ENCODE measurements at regions of chr6 and their contacts with region 1.

Region 1: DNA sequence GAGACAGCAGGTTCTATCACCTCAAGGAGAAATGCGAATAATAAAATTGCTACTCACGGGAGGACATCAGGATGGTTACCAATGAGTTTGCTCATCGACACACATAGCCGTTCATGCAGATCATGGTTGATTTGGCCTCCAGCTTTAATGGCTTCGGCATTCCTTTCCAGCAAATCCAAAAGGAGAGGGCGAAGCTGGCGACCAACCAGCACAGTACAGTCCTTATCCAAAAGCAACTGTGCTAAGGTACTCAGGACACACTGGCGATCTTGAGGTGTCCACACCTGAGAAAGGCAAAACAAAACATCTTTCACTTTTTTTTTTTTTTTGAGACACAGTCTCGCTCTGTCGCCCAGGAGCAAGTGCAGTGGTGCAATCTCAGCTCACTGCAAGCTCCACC is 16.3 kb downstream of the MDN1 start:
- DNase-seq: no peak
- ATAC-seq: no peak
- H3K4me3 Mint-ChIP-seq: no peak overlapping the region
- H3K27ac Mint-ChIP-seq: no peak overlapping the region
- H3K4me1 Mint-ChIP-seq: peaks cover 9% of the 10 kb centered on the region
- H3K27me3 Mint-ChIP-seq: no peaks in the 10 kb centered on the region

Region 2: GRCh38 chr6:89792873-89793272 is 10.4 kb before region 1 on chr6:
- CTCF ChIA-PET with region 1: interaction called, 10 read pairs
- POLR2A ChIA-PET with region 1: no interaction called
- intact Hi-C with region 1: no loop called
- DNase-seq: peak; percentile 35
- ATAC-seq: peak; percentile 72
- H3K4me3 Mint-ChIP-seq: no peak overlapping the region
- H3K27ac Mint-ChIP-seq: no peak overlapping the region
- H3K4me1 Mint-ChIP-seq: peaks cover 26% of the 10 kb centered on the region
- H3K27me3 Mint-ChIP-seq: no peaks in the 10 kb centered on the region

Region 3: GRCh38 chr6:89895276-89895874 is 92.1 kb after region 1 on chr6:
- CTCF ChIA-PET with region 1: no interaction called
- POLR2A ChIA-PET with region 1: no interaction called
- intact Hi-C with region 1: no loop called
- DNase-seq: peak; percentile 26
- ATAC-seq: no peak
- H3K4me3 Mint-ChIP-seq: no peak overlapping the region
- H3K27ac Mint-ChIP-seq: no peak overlapping the region
- H3K4me1 Mint-ChIP-seq: peaks cover 5% of the 10 kb centered on the region
- H3K27me3 Mint-ChIP-seq: peaks cover 25% of the 10 kb centered on the region